ENCODE measurements at regions of chr2 and their contacts with region 1.

Region 1: DNA sequence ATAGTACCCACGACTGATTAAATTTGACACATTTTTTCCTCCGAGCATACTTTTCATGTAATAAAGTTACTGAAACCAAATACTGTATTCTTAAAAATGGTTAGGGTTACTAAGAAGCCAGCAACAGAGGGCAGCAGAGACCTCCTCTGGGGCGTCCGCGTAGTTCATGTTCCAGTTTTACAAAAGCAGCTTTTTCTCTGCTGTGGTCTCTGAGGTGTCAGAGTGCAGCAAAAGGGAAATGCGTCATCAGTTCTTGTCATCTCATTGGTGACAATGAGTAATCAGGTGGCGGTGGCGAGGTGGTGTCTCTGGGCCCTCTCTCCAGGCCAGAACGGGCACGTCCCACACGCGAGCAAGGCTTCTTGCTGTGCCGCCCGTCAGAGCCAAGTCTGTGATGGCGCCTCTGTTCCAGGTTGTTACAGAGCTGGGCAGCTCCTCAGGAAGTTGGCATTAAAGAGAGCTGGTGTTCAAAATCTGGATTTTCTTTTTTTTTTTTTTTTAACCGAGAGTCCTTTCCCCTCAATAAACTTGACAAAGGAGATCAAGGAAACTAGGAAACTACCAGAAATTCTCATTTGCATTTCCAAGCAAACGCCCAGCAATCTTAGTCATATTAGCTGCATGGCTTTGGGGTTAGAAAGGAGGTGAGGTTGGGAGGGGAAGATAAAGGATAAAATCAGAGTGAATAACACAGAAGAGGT is 98.6 kb upstream of the BZW1 start:
- DNase-seq: peak; percentile 98
- ATAC-seq: peak; percentile 99
- H3K4me3 ChIP-seq: no peak overlapping the region
- H3K27ac ChIP-seq: peak overlapping the region; percentile 82
- H3K4me1 ChIP-seq: peaks cover 7% of the 10 kb centered on the region
- H3K27me3 ChIP-seq: no peaks in the 10 kb centered on the region
- CTCF ChIP-seq: peak; percentile 75 to 94 (median 80)
- EP300 ChIP-seq: peak; percentile 85 to 94; a peak in 3 of 4 replicates
- POLR2A ChIP-seq: peak; percentile 98
- RAD21 ChIP-seq: peak; percentile 95

Region 2: DNA sequence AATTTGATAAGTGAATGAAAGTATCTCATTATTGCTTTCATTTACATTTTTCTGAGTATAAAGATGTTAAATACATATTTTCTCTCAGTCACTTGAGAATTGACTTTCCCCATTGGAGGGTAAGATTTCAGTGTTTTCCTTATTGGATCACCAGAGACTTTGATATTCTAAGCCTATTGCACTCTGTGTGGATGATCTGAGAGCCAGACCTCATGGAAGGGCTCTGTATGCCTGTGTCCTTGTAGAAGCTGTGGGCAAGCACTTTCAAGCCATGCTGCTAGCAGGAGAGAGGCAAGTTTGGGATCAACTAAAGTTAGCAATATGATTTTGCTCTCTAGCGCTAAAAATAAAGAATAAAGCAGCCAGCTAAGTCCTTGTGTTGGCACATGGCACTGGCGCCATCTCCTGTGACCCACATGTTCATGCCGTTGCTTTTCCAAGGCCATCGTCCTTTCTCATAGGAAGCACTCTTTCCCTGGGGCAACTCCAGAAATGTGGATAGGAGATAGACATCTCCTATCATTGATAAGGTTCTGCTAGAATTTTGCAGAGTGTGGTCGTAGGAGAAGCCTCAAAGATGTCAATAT is 54.8 kb before region 1 on chr2:
- CTCF ChIA-PET with region 1: no interaction called
- POLR2A ChIA-PET with region 1: no interaction called
- RAD21 ChIA-PET with region 1: no interaction called
- SMC1A ChIA-PET with region 1: no interaction called
- in situ Hi-C with region 1: no loop called
- intact Hi-C with region 1: no loop called
- DNase-seq: no peak
- ATAC-seq: no peak
- H3K4me3 ChIP-seq: no peak overlapping the region
- H3K27ac ChIP-seq: no peak overlapping the region
- H3K4me1 ChIP-seq: no peaks in the 10 kb centered on the region
- H3K27me3 ChIP-seq: peaks cover 0 to 4% of the 10 kb centered on the region in 2 experiments; a peak in 1 of 4 replicates
- CTCF ChIP-seq: no peak
- EP300 ChIP-seq: no peak
- POLR2A ChIP-seq: no peak
- RAD21 ChIP-seq: peak; percentile 38; the same call in 1 of the 2 replicates

Region 3: GRCh38 chr2:200677721-200678585 is 35.2 kb before region 1 on chr2:
- CTCF ChIA-PET with region 1: no interaction called
- POLR2A ChIA-PET with region 1: no interaction called
- RAD21 ChIA-PET with region 1: no interaction called
- SMC1A ChIA-PET with region 1: no interaction called
- in situ Hi-C with region 1: no loop called
- intact Hi-C with region 1: no loop called
- DNase-seq: no peak
- ATAC-seq: no peak
- H3K4me3 ChIP-seq: no peak overlapping the region
- H3K27ac ChIP-seq: no peak overlapping the region
- H3K4me1 ChIP-seq: no peaks in the 10 kb centered on the region
- H3K27me3 ChIP-seq: peaks cover 0 to 4% of the 10 kb centered on the region in 2 experiments; a peak in 2 of 4 replicates
- CTCF ChIP-seq: no peak
- EP300 ChIP-seq: no peak
- POLR2A ChIP-seq: no peak
- RAD21 ChIP-seq: no peak

Region 4: DNA sequence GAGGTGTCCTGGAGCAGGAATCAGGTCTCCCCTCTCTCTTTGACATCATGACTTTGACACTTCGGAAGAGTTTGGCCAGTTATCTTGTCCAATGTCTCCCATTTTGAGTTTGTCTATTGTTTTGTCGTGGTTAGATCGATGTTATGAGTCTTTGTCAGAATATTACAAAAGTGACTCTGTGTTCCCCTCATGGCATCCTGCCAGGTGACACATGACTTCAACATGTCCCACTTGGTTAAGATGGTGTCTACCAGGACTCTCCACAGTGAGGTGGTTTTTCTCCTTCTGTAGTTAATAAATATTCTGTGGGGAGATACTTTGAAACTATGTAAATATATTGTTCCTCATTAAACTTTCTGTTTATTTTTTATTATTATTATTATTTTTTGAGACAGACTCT is 21.9 kb after region 1 on chr2:
- CTCF ChIA-PET with region 1: interaction called, 12 read pairs
- POLR2A ChIA-PET with region 1: interaction called, 7 read pairs
- RAD21 ChIA-PET with region 1: interaction called, 12 read pairs
- SMC1A ChIA-PET with region 1: interaction called, 19 read pairs
- in situ Hi-C with region 1: no loop called
- intact Hi-C with region 1: no loop called
- DNase-seq: no peak
- ATAC-seq: no peak
- H3K4me3 ChIP-seq: no peak overlapping the region
- H3K27ac ChIP-seq: no peak overlapping the region
- H3K4me1 ChIP-seq: no peaks in the 10 kb centered on the region
- H3K27me3 ChIP-seq: peaks cover 0 to 3% of the 10 kb centered on the region in 2 experiments; a peak in 2 of 4 replicates
- CTCF ChIP-seq: no peak
- EP300 ChIP-seq: no peak
- POLR2A ChIP-seq: no peak
- RAD21 ChIP-seq: no peak

Region 5: DNA sequence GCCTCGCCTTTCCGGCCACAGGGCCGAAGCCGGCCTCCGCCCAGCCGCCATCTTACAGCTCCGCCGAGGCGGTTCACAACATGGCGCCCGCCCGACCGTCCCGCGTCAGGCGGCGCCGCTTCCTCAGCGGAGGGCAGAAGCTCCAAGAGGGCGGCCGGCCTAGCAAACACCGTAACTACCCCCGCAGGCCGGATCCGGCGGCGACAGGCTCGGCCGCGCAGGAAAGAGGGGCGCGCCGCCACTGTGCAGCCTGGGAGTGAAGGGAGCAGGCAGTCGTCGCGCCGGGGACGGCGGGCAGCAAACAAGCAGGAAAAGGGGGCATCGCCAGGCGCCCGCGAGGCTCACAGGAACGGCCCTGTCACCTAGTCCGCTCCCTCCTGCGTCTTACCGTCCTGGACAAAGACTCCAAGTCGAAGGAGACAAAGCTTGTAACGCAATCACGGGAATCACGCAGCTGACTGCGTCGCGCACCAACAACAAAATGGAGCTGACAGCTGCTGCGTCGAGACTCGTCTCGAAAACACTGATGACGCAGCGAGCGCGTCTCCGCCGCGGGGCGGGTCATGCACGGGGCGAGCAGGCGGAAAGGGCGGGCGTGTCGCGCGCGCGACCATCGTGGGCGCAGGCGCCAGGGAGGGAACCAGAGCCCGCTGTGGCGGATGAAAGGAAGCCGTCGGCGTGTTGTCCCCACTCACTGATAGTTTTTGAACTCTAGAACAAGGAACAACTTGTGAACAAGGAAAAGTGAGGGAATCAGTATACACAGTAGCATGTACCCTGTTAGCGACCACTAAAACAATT is 151.2 kb after region 1 on chr2 and contains the start of gene CLK1:
- CTCF ChIA-PET with region 1: interaction called, 6 read pairs
- POLR2A ChIA-PET with region 1: interaction called, 13 read pairs
- RAD21 ChIA-PET with region 1: interaction called, 6 read pairs
- SMC1A ChIA-PET with region 1: interaction called, 6 read pairs
- in situ Hi-C with region 1: no loop called
- intact Hi-C with region 1: loop called (anchors 1 kb)
- DNase-seq: peak; percentile 74
- ATAC-seq: peak; percentile 88
- H3K4me3 ChIP-seq: peak within 1 kb of the TSS; percentile 100
- H3K27ac ChIP-seq: peak within 1 kb of the TSS; percentile 100
- H3K4me1 ChIP-seq: no peaks in the 10 kb centered on the region
- H3K27me3 ChIP-seq: no peaks in the 10 kb centered on the region
- CTCF ChIP-seq: no peak
- EP300 ChIP-seq: 0 out of 4 replicates have a peak, but pooled peaks of 1 of the 2 experiments have one; percentile 52
- POLR2A ChIP-seq: peak; percentile 99
- RAD21 ChIP-seq: no peak
- polyA plus RNA-seq, gene CLK1: 95.6 to 138 TPM

Region 6: DNA sequence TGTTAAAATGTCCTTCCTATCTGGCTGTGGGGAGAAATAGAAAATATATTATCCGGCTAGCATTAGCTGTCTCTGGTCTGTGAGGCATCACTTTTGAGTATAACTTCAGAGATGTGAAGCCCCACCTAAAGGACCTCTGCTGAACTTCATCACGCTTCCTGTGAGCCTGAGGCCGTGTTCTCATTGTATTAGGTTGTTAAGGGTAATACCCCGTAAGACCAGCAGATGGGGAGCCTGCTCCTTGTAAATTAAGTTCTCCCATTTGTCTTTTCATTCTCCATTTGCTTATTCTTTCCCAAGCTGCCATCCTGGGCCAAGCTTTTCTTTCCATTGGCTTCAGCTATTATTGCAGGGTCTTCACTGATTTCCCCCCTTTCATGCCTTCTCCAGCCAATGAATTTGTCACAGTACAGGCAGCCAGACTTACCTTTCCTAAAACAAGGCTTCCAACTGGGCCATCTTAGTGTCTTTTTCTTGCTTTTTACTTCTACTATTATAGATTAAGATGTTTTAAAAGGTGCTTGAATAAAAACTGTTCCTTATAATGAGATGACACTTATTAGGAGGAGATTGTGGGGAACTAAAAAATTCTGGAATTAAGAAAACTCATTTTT is 188.4 kb after region 1 on chr2:
- CTCF ChIA-PET with region 1: interaction called, 21 read pairs
- POLR2A ChIA-PET with region 1: no interaction called
- RAD21 ChIA-PET with region 1: interaction called, 11 read pairs
- SMC1A ChIA-PET with region 1: interaction called, 16 read pairs
- in situ Hi-C with region 1: no loop called
- intact Hi-C with region 1: loop called (anchors 1 kb)
- DNase-seq: peak; percentile 72
- ATAC-seq: peak; percentile 99
- H3K4me3 ChIP-seq: no peak overlapping the region
- H3K27ac ChIP-seq: no peak overlapping the region
- H3K4me1 ChIP-seq: no peaks in the 10 kb centered on the region
- H3K27me3 ChIP-seq: no peaks in the 10 kb centered on the region
- CTCF ChIP-seq: peak; percentile 71 to 90 (median 87); a peak in 5 of 6 replicates
- EP300 ChIP-seq: no peak
- POLR2A ChIP-seq: no peak
- RAD21 ChIP-seq: peak; percentile 76

Region 7: DNA sequence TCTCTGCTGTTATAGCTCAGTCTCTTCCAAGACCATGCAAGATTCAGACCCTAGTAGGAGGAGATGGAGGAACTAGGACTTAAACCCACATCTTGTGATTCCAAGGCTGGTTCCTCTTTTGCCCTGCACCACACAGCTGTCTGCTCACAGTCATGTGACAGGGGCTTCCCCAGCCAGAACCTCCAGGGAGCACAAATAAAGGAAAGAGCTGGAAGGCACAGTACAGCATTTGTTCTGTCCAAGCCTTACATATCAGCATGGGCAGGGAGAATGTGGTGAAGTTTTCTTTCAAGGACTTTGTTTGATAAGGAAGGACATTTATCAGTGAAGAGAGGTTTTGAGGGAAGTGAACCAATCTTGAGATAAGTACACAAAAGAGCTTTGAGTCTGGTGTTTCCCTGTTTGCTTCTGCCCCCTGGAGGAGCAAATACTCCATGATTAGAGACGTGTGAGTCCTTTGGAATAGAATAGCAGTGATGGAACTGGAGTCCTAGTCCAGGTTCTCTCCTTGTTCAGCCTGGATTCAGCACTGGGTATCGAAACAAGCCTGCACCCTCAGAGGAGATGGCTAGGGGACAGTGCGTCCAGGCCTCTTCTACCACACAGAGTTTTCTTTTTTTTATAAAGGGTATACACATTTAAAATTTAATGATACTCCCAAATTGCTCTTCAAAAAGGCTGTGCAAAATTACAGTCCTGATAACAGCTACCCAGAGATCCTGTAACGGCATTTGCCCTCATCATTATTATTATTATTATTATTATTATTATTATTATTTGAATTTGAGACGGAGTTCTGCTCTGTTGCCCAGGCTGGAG is 445.2 kb after region 1 on chr2:
- CTCF ChIA-PET with region 1: interaction called, 10 read pairs
- POLR2A ChIA-PET with region 1: no interaction called
- RAD21 ChIA-PET with region 1: interaction called, 5 read pairs
- SMC1A ChIA-PET with region 1: no interaction called
- in situ Hi-C with region 1: loop called (anchors 5 kb)
- intact Hi-C with region 1: no loop called
- DNase-seq: peak; percentile 77
- ATAC-seq: peak; percentile 98
- H3K4me3 ChIP-seq: no peak overlapping the region
- H3K27ac ChIP-seq: peak overlapping the region; percentile 35
- H3K4me1 ChIP-seq: peaks cover 14% of the 10 kb centered on the region
- H3K27me3 ChIP-seq: no peaks in the 10 kb centered on the region
- CTCF ChIP-seq: peak; percentile 62 to 76 (median 66)
- EP300 ChIP-seq: peak; percentile 59 to 70; a peak in 2 of 4 replicates
- POLR2A ChIP-seq: no peak
- RAD21 ChIP-seq: peak; percentile 77

Region 8: DNA sequence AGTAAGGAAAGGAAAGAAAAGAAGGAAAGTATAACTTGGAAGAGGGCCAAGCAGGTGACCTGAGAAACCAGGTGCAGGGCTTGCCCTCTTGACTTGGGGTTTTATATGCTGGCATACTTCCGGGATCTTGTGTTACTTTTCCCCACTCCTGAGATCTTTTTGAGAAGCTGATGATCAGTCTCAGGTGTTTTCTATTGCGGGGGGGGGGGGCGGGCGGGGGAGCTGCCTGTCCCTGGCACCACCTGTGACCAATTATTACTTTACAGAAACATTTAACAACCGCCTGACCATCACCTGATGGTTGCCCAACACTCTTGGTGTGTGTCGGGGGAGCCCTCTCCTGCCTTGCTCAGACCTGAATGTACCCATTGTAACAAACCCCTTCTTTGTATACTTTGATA is 462.9 kb after region 1 on chr2:
- CTCF ChIA-PET with region 1: interaction called, 31 read pairs
- POLR2A ChIA-PET with region 1: no interaction called
- RAD21 ChIA-PET with region 1: interaction called, 4 read pairs
- SMC1A ChIA-PET with region 1: interaction called, 9 read pairs
- in situ Hi-C with region 1: no loop called
- intact Hi-C with region 1: loop called (anchors 2 kb)
- DNase-seq: no peak
- ATAC-seq: no peak
- H3K4me3 ChIP-seq: no peak overlapping the region
- H3K27ac ChIP-seq: no peak overlapping the region
- H3K4me1 ChIP-seq: no peaks in the 10 kb centered on the region
- H3K27me3 ChIP-seq: no peaks in the 10 kb centered on the region
- CTCF ChIP-seq: no peak
- EP300 ChIP-seq: no peak
- POLR2A ChIP-seq: no peak
- RAD21 ChIP-seq: no peak

Measured in GM12878 (cell line).